CD8-positive, alpha-beta T cell (primary cell): ENCODE measurements at regions of chr1 and their contacts with region 1.

Region 1: GRCh38 chr1:202888531-202889360 is at the start of gene RABIF:
- DNase-seq: peak; percentile 91 to 98 (median 96)
- ATAC-seq: peak; percentile 92
- H3K4me3 ChIP-seq: peak within 1 kb of the TSS; percentile 84 to 97
- H3K4me3 Mint-ChIP-seq: peak within 1 kb of the TSS; percentile 94
- H3K27ac ChIP-seq: peak within 1 kb of the TSS; percentile 92 to 94
- H3K27ac Mint-ChIP-seq: peak within 1 kb of the TSS; percentile 96
- H3K4me1 ChIP-seq: peaks cover 18% of the 10 kb centered on the region
- H3K4me1 Mint-ChIP-seq: peaks cover 30% of the 10 kb centered on the region
- H3K27me3 ChIP-seq: no peaks in the 10 kb centered on the region
- H3K27me3 Mint-ChIP-seq: no peaks in the 10 kb centered on the region
- CTCF ChIP-seq: no peak
- total RNA-seq, gene RABIF: 10.1 to 10.8 TPM

Region 2: GRCh38 chr1:202144402-202145067 is 744.2 kb before region 1 on chr1 and contains the start of gene ARL8A:
- CTCF ChIA-PET with region 1: no interaction called
- POLR2A ChIA-PET with region 1: no interaction called
- intact Hi-C with region 1: loop called in 1 of 2 experiments (anchors 10 kb)
- DNase-seq: peak; percentile 35 to 79 (median 66)
- ATAC-seq: peak; percentile 76
- H3K4me3 ChIP-seq: peak within 1 kb of the TSS; percentile 64 to 92
- H3K4me3 Mint-ChIP-seq: peak within 1 kb of the TSS; percentile 92
- H3K27ac ChIP-seq: peak within 1 kb of the TSS; percentile 64 to 82
- H3K27ac Mint-ChIP-seq: peak within 1 kb of the TSS; percentile 94
- H3K4me1 ChIP-seq: peaks cover 22% of the 10 kb centered on the region
- H3K4me1 Mint-ChIP-seq: peaks cover 35% of the 10 kb centered on the region
- H3K27me3 ChIP-seq: no peaks in the 10 kb centered on the region
- H3K27me3 Mint-ChIP-seq: no peaks in the 10 kb centered on the region
- CTCF ChIP-seq: no peak
- total RNA-seq, gene ARL8A: 58.4 to 64.2 TPM

Region 3: DNA sequence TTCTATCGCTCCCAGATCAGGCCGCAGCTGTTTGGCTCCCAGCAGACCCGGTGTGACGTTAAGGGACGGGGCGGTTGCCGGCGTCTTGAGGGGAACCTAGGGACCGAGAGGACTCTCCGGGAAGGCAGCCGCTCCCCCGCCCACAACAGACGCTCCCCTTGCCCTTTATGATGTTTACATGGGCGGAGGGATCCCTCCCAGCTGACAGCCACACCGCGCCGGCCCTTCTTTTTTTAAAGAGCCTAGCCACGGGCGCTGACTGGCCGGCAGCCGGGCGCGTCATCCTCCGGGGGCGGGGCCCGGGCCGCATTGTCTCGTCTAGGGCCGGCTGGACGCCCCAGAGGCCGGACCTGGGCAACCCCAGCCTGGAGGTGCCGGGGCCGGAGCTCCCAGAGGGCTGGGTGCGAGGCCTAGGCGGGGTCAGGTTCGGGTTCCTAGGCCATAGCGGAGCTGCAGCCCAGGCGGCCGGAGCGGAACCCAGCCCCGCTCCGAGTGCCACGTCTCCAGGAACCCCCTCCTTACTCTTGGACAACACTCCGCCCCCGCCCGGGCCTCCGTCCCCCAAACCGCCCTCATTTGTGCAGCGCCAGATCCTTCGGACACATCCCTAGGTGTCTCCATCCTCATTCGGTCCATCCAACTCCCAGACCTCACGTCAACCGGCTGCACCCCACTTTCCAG is 78.0 kb before region 1 on chr1 and contains the start of gene PCAT6:
- CTCF ChIA-PET with region 1: no interaction called
- POLR2A ChIA-PET with region 1: interaction called, 5 read pairs
- intact Hi-C with region 1: loop called (anchors 1 to 2 kb)
- DNase-seq: peak; percentile 67 to 93 (median 84)
- ATAC-seq: peak; percentile 67
- H3K4me3 ChIP-seq: peak within 1 kb of the TSS; percentile 80 to 94
- H3K4me3 Mint-ChIP-seq: peak within 1 kb of the TSS; percentile 88
- H3K27ac ChIP-seq: peak within 1 kb of the TSS; percentile 51 to 72
- H3K27ac Mint-ChIP-seq: peak within 1 kb of the TSS; percentile 90
- H3K4me1 ChIP-seq: peaks cover 20% of the 10 kb centered on the region
- H3K4me1 Mint-ChIP-seq: peaks cover 34% of the 10 kb centered on the region
- H3K27me3 ChIP-seq: no peaks in the 10 kb centered on the region
- H3K27me3 Mint-ChIP-seq: no peaks in the 10 kb centered on the region
- CTCF ChIP-seq: no peak
- total RNA-seq, gene PCAT6: 0.92 to 1.6 TPM

Region 4: DNA sequence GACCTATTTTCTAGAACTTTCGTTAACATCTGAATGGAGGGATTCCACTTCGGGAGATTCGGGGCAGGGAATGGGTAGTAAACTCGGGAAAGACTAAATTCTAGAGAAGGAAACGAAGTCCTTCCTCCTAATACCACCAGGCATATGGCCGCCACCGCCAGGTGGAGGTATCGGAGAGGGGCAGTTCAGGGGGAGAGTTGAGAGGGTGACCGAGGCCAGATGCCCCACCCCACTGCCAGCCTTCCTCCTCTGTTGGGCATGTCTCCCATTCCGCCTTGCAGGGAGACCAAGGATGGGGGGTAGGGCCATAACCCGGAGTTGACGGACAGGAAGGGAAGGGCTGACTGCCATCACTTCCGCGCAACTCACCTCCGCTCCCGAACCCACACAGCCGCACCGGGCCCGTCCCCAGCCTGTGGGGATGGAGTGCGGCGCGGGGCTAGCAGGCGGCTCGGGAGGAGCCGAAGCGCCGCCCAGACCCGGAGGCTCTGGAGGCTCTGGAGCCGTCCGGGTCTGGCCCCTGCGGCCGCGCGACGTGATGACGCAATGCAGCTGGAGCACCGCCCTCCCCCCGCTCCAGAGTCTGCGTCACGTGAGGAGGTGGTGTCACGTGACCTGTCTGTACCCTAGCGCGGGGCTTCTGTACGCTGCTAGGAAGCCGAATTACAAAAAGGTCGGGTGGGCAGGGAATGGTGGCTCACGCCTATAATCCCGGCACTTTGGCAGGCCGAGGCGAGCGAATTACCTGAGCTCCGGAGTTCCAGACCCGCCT is 38.2 kb after region 1 on chr1 and contains the start of gene KLHL12:
- CTCF ChIA-PET with region 1: interaction called, 3 read pairs
- POLR2A ChIA-PET with region 1: interaction called, 6 read pairs
- intact Hi-C with region 1: loop called (anchors 1 kb)
- DNase-seq: peak; percentile 87 to 97 (median 95)
- ATAC-seq: peak; percentile 95
- H3K4me3 ChIP-seq: peak within 1 kb of the TSS; percentile 97 to 98
- H3K4me3 Mint-ChIP-seq: peak within 1 kb of the TSS; percentile 96
- H3K27ac ChIP-seq: peak within 1 kb of the TSS; percentile 95 to 97
- H3K27ac Mint-ChIP-seq: peak within 1 kb of the TSS; percentile 97
- H3K4me1 ChIP-seq: peaks cover 18% of the 10 kb centered on the region
- H3K4me1 Mint-ChIP-seq: peaks cover 31% of the 10 kb centered on the region
- H3K27me3 ChIP-seq: no peaks in the 10 kb centered on the region
- H3K27me3 Mint-ChIP-seq: no peaks in the 10 kb centered on the region
- CTCF ChIP-seq: peak; percentile 87
- total RNA-seq, gene KLHL12: 17.9 to 19.2 TPM

Region 5: GRCh38 chr1:202957733-202958543 is 69.2 kb after region 1 on chr1 and contains the start of gene ADIPOR1:
- CTCF ChIA-PET with region 1: no interaction called
- POLR2A ChIA-PET with region 1: no interaction called
- intact Hi-C with region 1: loop called (anchors 1 kb)
- DNase-seq: peak; percentile 89 to 96 (median 94)
- ATAC-seq: peak; percentile 97
- H3K4me3 ChIP-seq: peak within 1 kb of the TSS; percentile 89 to 93
- H3K4me3 Mint-ChIP-seq: peak within 1 kb of the TSS; percentile 81
- H3K27ac ChIP-seq: peak within 1 kb of the TSS; percentile 89 to 94
- H3K27ac Mint-ChIP-seq: peak within 1 kb of the TSS; percentile 92
- H3K4me1 ChIP-seq: peaks cover 36% of the 10 kb centered on the region
- H3K4me1 Mint-ChIP-seq: peaks cover 46% of the 10 kb centered on the region
- H3K27me3 ChIP-seq: no peaks in the 10 kb centered on the region
- H3K27me3 Mint-ChIP-seq: no peaks in the 10 kb centered on the region
- CTCF ChIP-seq: no peak
- total RNA-seq, gene ADIPOR1: 106 to 117 TPM

Region 6: DNA sequence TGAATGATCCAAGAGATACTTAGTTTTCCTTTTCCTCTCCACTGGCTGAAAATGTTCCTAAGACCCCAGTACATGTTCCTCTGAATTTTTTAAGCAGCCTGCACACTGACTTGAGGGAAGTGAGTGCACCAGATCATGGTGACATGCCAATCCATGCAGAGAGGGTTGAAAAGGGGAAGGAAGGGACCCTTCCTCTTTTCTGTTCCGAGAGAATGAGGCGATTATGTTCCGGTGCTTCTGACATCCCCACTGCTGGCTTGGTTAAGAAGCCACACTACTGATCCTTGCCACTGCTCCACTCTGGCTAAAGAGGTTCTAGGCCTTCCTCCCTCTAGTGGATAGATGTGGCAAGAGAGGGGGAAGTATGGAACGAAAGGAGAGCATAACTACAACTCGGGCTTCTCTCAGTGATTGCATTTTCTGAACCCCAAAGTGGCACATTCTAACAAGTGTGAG is 80.1 kb after region 1 on chr1:
- CTCF ChIA-PET with region 1: no interaction called
- POLR2A ChIA-PET with region 1: interaction called, 8 read pairs
- intact Hi-C with region 1: loop called (anchors 1 kb)
- DNase-seq: peak in 4 of 9 experiments; percentile 14 to 64 (median 40)
- ATAC-seq: peak; percentile 19
- H3K4me3 ChIP-seq: no peak overlapping the region
- H3K4me3 Mint-ChIP-seq: peak overlapping the region; percentile 49
- H3K27ac ChIP-seq: no peak overlapping the region
- H3K27ac Mint-ChIP-seq: no peak overlapping the region
- H3K4me1 ChIP-seq: peaks cover 24% of the 10 kb centered on the region
- H3K4me1 Mint-ChIP-seq: peaks cover 32% of the 10 kb centered on the region
- H3K27me3 ChIP-seq: no peaks in the 10 kb centered on the region
- H3K27me3 Mint-ChIP-seq: no peaks in the 10 kb centered on the region
- CTCF ChIP-seq: peak; percentile 28

Region 7: DNA sequence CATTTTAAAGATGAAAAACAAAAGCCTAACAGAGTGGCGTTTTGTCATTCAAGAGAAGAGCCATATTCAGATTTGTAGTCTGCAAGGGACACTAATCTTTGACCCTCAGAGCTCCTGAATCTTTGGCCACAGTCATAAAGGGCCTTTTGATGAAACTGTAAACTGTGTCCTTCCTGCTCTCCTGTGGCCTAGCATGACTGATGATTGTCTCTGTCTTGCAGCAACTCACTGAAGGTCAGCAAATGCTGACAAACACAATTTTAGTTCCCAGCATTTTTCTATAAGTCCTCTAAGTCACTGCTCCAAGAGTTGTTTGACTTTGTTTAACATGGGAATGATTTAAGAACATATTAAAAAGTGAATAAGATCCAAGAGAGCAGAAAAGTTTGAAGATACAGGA is 531.5 kb after region 1 on chr1:
- CTCF ChIA-PET with region 1: no interaction called
- POLR2A ChIA-PET with region 1: no interaction called
- intact Hi-C with region 1: no loop called
- DNase-seq: no peak
- ATAC-seq: no peak
- H3K4me3 ChIP-seq: no peak overlapping the region
- H3K4me3 Mint-ChIP-seq: no peak overlapping the region
- H3K27ac ChIP-seq: no peak overlapping the region
- H3K27ac Mint-ChIP-seq: no peak overlapping the region
- H3K4me1 ChIP-seq: no peaks in the 10 kb centered on the region
- H3K4me1 Mint-ChIP-seq: no peaks in the 10 kb centered on the region
- H3K27me3 ChIP-seq: peaks cover 0 to 2% of the 10 kb centered on the region in 2 experiments
- H3K27me3 Mint-ChIP-seq: peaks cover 16% of the 10 kb centered on the region
- CTCF ChIP-seq: no peak